A549 (cell line): ENCODE measurements at regions of chr11 and their contacts with region 1.

Region 1: GRCh38 chr11:116732271-116733042 is 40.3 kb downstream of the BUD13 start:
- DNase-seq: peak; percentile 62 to 67
- ATAC-seq: peak; percentile 84 to 94
- H3K4me3 ChIP-seq: no peak overlapping the region
- H3K27ac ChIP-seq: no peak overlapping the region
- H3K4me1 ChIP-seq: no peaks in the 10 kb centered on the region
- CTCF ChIP-seq: peak; percentile 54
- EP300 ChIP-seq: no peak
- POLR2A ChIP-seq: no peak
- RAD21 ChIP-seq: peak; percentile 30 to 39; a peak in 2 of 5 replicates

Region 2: GRCh38 chr11:116691771-116692177 is 40.7 kb before region 1 on chr11:
- CTCF ChIA-PET with region 1: no interaction called
- POLR2A ChIA-PET with region 1: no interaction called
- DNase-seq: peak in 1 of 2 experiments; percentile 69
- ATAC-seq: peak; percentile 71 to 91; a peak in 4 of 6 replicates
- H3K4me3 ChIP-seq: no peak overlapping the region
- H3K27ac ChIP-seq: no peak overlapping the region
- H3K4me1 ChIP-seq: no peaks in the 10 kb centered on the region
- CTCF ChIP-seq: peak; percentile 65
- EP300 ChIP-seq: no peak
- POLR2A ChIP-seq: no peak
- RAD21 ChIP-seq: peak; percentile 82 to 85

Region 3: GRCh38 chr11:116703421-116703820 is 29.0 kb before region 1 on chr11:
- CTCF ChIA-PET with region 1: no interaction called
- POLR2A ChIA-PET with region 1: no interaction called
- DNase-seq: no peak
- ATAC-seq: no peak
- H3K4me3 ChIP-seq: no peak overlapping the region
- H3K27ac ChIP-seq: no peak overlapping the region
- H3K4me1 ChIP-seq: no peaks in the 10 kb centered on the region
- CTCF ChIP-seq: no peak
- EP300 ChIP-seq: no peak
- POLR2A ChIP-seq: no peak
- RAD21 ChIP-seq: no peak

Region 4: GRCh38 chr11:116721988-116722387 is 10.5 kb before region 1 on chr11:
- CTCF ChIA-PET with region 1: interaction called, 12 read pairs
- POLR2A ChIA-PET with region 1: no interaction called
- DNase-seq: no peak
- ATAC-seq: no peak
- H3K4me3 ChIP-seq: no peak overlapping the region
- H3K27ac ChIP-seq: no peak overlapping the region
- H3K4me1 ChIP-seq: no peaks in the 10 kb centered on the region
- CTCF ChIP-seq: no peak
- EP300 ChIP-seq: no peak
- POLR2A ChIP-seq: no peak
- RAD21 ChIP-seq: no peak